ENCODE measurements at regions of chr9 and their contacts with region 1.

Region 1: DNA sequence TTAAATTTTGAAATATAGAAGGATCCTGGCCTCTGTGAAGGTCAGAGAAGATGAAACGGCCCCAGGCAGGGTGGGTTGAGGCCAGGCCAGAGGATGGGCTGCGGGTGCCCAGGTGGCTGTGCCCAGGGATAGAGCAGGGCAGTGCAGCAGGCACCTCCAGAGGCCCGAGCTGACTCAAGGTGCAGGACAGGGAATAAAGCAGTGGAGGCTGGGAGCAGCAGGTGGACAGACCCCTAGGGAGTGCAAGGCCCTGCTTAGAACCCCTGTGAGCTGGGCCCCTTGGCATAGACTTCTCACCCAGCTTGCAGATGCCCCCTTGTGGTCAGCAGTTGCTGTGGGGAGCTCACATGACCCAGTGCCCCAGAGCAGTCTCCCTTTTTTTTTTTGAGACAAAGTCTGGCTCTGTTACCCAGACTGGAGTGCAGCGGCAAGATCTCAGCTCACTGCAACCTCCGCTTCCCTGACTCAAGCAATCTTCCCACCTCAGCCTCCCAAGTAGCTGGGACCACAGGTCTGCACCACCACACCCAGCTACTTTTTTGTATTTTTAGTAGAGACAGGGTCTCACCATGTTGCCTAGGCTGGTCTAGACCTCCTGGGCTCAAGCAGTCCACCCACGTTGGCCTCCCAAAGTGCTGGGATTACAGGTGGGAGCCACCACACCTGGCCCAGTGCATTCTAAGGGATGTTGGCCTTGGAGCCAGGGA is 118.8 kb downstream of the WNK2 start:
- DNase-seq: peak in 1 of 2 donors; percentile 58
- ATAC-seq: no peak
- H3K4me3 ChIP-seq: no peak overlapping the region
- H3K27ac ChIP-seq: peak overlapping the region in 1 of 4 donors; percentile 26
- H3K4me1 ChIP-seq: peaks cover 66 to 71% of the 10 kb centered on the region in 2 donors
- H3K27me3 ChIP-seq: no peaks in the 10 kb centered on the region
- CTCF ChIP-seq: peak in 4 of 5 experiments; percentile 33 to 59 (median 49)
- POLR2A ChIP-seq: no peak

Region 2: GRCh38 chr9:93108291-93109041 is 194.2 kb before region 1 on chr9:
- in situ Hi-C with region 1: no loop called
- intact Hi-C with region 1: loop called (anchors 2 kb)
- DNase-seq: peak in 1 of 2 donors; percentile 15
- ATAC-seq: no peak
- H3K4me3 ChIP-seq: no peak overlapping the region
- H3K27ac ChIP-seq: peak overlapping the region in 1 of 4 donors; percentile 16
- H3K4me1 ChIP-seq: peaks cover 3 to 11% of the 10 kb centered on the region in 2 donors
- H3K27me3 ChIP-seq: no peaks in the 10 kb centered on the region
- CTCF ChIP-seq: no peak
- POLR2A ChIP-seq: no peak

Region 3: DNA sequence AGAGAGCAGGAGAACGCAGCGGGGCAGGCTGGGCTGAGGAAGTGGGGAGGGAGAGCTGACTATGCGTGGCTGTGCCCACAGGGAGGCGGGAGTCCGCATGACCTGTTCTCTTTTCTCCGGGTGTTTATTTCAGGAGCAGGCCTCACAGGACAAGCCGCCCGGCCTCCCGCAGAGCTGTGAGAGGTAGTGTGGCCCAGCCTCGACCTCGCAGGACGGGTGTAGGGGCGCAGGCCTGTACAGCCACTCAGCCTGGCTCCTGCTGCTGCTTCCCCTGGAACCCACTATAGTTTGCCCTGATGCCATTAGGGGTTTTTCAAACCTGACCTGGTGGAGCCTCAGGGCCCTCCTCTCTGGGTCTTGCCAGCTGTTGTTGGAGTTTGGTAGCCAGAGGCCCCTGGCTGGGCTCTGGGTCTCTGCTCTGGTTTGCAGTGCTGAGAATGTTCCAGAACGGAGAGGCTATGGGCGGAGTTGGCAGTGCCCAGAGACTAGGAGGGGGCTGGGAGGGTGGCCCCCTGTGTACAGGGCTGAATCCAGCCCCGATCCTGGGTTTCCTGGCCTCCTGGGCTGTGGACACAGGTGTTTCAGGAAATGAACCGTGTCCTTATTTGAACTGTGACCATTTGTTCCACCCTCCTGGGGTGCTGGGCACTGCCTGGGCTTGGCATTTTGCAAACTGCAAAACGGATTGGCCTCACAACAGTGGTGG is 40.0 kb before region 1 on chr9:
- in situ Hi-C with region 1: no loop called
- intact Hi-C with region 1: loop called (anchors 5 kb)
- DNase-seq: peak; percentile 69 to 76
- ATAC-seq: peak in 1 of 2 donors; percentile 73
- H3K4me3 ChIP-seq: no peak overlapping the region
- H3K27ac ChIP-seq: peak overlapping the region; percentile 14 to 84 (median 60)
- H3K4me1 ChIP-seq: peaks cover 30 to 44% of the 10 kb centered on the region in 2 donors
- H3K27me3 ChIP-seq: no peaks in the 10 kb centered on the region
- CTCF ChIP-seq: peak in 1 of 5 experiments; percentile 39
- POLR2A ChIP-seq: no peak

Region 4: GRCh38 chr9:93566408-93567270 is 263.9 kb after region 1 on chr9:
- in situ Hi-C with region 1: loop called in 1 of 4 experiments (anchors 25 kb)
- intact Hi-C with region 1: no loop called
- DNase-seq: peak; percentile 95 to 97
- ATAC-seq: peak; percentile 93 to 94
- H3K4me3 ChIP-seq: peak overlapping the region; percentile 64 to 88 (median 72)
- H3K27ac ChIP-seq: peak overlapping the region; percentile 89 to 99 (median 94)
- H3K4me1 ChIP-seq: peaks cover 10 to 13% of the 10 kb centered on the region in 2 donors
- H3K27me3 ChIP-seq: no peaks in the 10 kb centered on the region
- CTCF ChIP-seq: peak; percentile 92 to 98 (median 95)
- POLR2A ChIP-seq: peak; percentile 83 to 89